Endothelial cell of umbilical vein (primary cell): ENCODE measurements at regions of chr15 and their contacts with region 1.

Region 1: GRCh38 chr15:51721199-51721960 is 16.1 kb downstream of the LYSMD2 start:
- DNase-seq: peak; percentile 86
- H3K4me3 ChIP-seq: peak overlapping the region in 1 of 3 experiments; percentile 2
- H3K27ac ChIP-seq: peak overlapping the region; percentile 60
- H3K4me1 ChIP-seq: peaks cover 15% of the 10 kb centered on the region
- H3K27me3 ChIP-seq: no peaks in the 10 kb centered on the region
- CTCF ChIP-seq: no peak
- POLR2A ChIP-seq: no peak

Region 2: GRCh38 chr15:51737280-51738017 is 16.1 kb after region 1 on chr15 and contains the start of gene LYSMD2:
- CTCF ChIA-PET with region 1: interaction called, 3 read pairs
- POLR2A ChIA-PET with region 1: interaction called, 4 read pairs
- dilution Hi-C with region 1: no loop called
- intact Hi-C with region 1: loop called (anchors 1 kb)
- DNase-seq: peak; percentile 71
- H3K4me3 ChIP-seq: peak within 1 kb of the TSS; percentile 40 to 59 (median 52)
- H3K27ac ChIP-seq: no peak within 1 kb of the TSS
- H3K4me1 ChIP-seq: peaks cover 3% of the 10 kb centered on the region
- H3K27me3 ChIP-seq: no peaks in the 10 kb centered on the region
- CTCF ChIP-seq: no peak
- POLR2A ChIP-seq: no peak
- total RNA-seq, gene LYSMD2: 8.0 and 8.2 TPM in 2 replicates